ENCODE measurements at regions of chr7 and their contacts with region 1.

Region 1: DNA sequence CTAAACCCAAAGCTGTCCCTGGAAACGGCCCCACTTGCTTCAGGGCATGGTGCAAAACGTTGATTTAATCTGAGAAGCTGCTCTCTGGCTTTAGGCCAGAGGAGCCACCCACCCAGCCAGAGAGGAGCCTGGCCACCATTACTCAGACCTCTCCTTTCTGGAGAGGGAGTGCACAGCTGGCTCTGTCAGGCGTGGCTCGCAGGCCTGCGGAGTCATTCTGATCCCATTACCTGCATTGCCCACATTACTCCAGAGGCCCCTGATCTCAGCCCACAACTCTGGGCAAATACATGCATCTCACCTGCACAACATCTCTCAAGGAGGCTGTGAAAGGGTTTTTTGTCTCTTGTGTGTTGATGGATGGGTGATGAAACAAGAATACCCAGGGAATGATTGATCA is 370.0 kb upstream of the IGFBP3 start:
- DNase-seq: peak; percentile 47
- ATAC-seq: peak; percentile 94
- H3K4me3 ChIP-seq: no peak overlapping the region
- H3K27ac ChIP-seq: peak overlapping the region; percentile 19; the same call in 1 of the 2 replicates
- H3K4me1 ChIP-seq: no peaks in the 10 kb centered on the region
- H3K27me3 ChIP-seq: no peaks in the 10 kb centered on the region
- CTCF ChIP-seq: no peak
- EP300 ChIP-seq: no peak
- POLR2A ChIP-seq: no peak
- RAD21 ChIP-seq: no peak

Region 2: DNA sequence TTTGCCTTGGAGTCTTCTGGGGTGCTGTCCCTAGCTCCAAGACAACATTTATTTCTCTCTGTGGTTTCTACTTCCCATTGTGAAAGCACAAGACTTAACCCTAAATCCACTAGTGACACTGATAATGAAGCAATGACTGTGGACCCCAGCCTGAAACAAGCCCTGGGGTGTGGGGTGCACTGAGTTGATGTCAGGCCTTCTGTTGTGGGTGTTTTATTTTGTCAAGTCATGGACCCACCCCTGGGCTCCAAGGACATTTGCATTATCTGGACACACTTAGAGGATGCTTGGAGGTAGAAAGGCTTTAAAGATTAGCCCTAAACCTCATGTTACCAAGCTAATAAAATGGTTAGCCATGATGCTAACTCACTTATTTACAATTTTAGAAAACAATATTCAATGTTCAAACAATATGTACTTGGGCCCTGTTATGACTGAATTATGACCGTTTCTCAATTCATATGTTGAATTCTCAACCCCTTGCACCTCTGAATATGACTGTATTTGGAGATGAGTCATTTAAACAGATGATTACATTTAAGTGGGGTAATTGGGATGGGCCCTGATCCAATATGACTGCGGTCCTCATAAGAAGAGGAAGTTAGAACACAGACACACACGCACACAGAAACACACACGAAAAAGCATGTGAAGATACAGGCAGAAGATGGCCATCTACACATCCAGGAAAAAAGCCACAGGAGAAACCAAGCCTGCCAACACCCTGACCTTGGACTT is 232.8 kb before region 1 on chr7:
- CTCF ChIA-PET with region 1: no interaction called
- POLR2A ChIA-PET with region 1: interaction called, 3 read pairs
- RAD21 ChIA-PET with region 1: interaction called, 3 read pairs
- SMC1A ChIA-PET with region 1: interaction called, 4 read pairs
- in situ Hi-C with region 1: no loop called
- intact Hi-C with region 1: loop called (anchors 1 kb)
- DNase-seq: no peak
- ATAC-seq: peak; percentile 85
- H3K4me3 ChIP-seq: no peak overlapping the region
- H3K27ac ChIP-seq: no peak overlapping the region
- H3K4me1 ChIP-seq: no peaks in the 10 kb centered on the region
- H3K27me3 ChIP-seq: no peaks in the 10 kb centered on the region
- CTCF ChIP-seq: no peak
- EP300 ChIP-seq: peak; percentile 77 to 82; a peak in 3 of 4 replicates
- POLR2A ChIP-seq: no peak
- RAD21 ChIP-seq: no peak

Region 3: GRCh38 chr7:46139079-46139478 is 152.0 kb before region 1 on chr7:
- CTCF ChIA-PET with region 1: no interaction called
- POLR2A ChIA-PET with region 1: interaction called, 4 read pairs
- RAD21 ChIA-PET with region 1: interaction called, 16 read pairs
- SMC1A ChIA-PET with region 1: interaction called, 7 read pairs
- in situ Hi-C with region 1: no loop called
- intact Hi-C with region 1: no loop called
- DNase-seq: peak; percentile 48
- ATAC-seq: peak; percentile 95
- H3K4me3 ChIP-seq: no peak overlapping the region
- H3K27ac ChIP-seq: no peak overlapping the region
- H3K4me1 ChIP-seq: no peaks in the 10 kb centered on the region
- H3K27me3 ChIP-seq: no peaks in the 10 kb centered on the region
- CTCF ChIP-seq: no peak
- EP300 ChIP-seq: peak; percentile 76 to 91
- POLR2A ChIP-seq: no peak
- RAD21 ChIP-seq: no peak

Region 4: DNA sequence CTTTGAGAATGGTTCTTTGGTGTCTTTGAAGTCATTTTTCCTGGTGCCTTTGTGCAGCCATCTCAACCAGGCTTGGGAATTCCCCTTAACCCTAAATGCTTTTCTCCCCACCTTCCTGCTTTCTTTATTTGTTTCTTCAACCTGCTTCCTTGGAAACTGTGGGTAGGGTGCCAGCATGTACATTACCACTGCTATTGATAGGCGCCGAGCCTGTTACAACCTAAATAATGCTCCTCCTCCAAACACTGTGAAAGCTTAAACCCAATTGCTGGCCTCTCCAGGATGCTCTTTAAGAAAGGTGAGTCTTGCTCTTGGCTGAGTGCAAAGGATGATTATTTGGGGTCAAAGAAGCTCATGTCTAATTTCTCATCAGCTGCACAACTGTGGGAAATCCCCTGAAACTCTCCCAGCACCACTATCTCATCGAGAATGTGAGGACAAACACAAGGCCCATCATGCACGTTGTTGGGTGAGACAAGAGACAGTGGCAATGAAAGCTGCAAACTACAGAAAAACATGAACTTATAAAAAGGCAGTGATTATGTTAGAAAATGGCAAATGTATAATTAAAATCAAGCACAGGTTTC is 84.5 kb before region 1 on chr7:
- CTCF ChIA-PET with region 1: no interaction called
- POLR2A ChIA-PET with region 1: no interaction called
- RAD21 ChIA-PET with region 1: interaction called, 10 read pairs
- SMC1A ChIA-PET with region 1: interaction called, 3 read pairs
- in situ Hi-C with region 1: no loop called
- intact Hi-C with region 1: no loop called
- DNase-seq: peak; percentile 42
- ATAC-seq: peak; percentile 80
- H3K4me3 ChIP-seq: no peak overlapping the region
- H3K27ac ChIP-seq: no peak overlapping the region
- H3K4me1 ChIP-seq: peaks cover 10% of the 10 kb centered on the region
- H3K27me3 ChIP-seq: no peaks in the 10 kb centered on the region
- CTCF ChIP-seq: no peak
- EP300 ChIP-seq: no peak
- POLR2A ChIP-seq: no peak
- RAD21 ChIP-seq: 0 out of 2 replicates have a peak, but pooled peaks have one; percentile 1

Region 5: DNA sequence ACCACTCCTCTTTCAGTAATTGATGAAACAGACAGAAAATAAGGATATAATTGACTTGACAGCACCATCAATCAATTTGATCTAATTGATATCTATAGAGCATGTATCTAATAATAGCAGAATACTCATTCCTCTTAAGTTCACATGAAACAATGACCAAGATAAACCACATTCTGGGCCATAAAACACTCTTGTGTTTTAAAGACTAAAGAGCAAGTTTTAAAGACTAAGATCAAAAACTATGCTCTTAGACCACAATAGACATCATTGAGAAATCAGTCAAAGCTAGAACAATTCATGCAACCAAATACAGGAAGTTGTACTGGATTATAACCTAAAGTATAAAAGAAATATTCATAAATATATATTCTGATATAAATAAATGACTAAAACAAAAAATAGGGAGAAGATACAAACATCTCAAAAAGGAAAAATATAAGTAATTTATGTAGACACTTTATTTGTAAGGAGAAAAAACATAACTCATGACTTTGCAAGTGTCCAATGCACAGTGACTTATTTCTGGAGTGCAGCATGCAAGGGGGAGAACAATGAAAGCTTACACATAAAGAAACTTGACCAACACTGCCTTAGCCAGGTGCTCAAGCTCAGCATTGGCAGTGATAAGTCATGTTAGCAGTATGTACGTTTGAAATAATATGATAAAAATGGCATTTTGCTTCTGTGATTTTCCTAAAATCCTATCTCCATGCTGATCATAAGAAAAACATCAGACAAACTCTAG is 57.3 kb before region 1 on chr7:
- CTCF ChIA-PET with region 1: interaction called, 3 read pairs
- POLR2A ChIA-PET with region 1: no interaction called
- RAD21 ChIA-PET with region 1: interaction called, 7 read pairs
- SMC1A ChIA-PET with region 1: interaction called, 5 read pairs
- in situ Hi-C with region 1: no loop called
- intact Hi-C with region 1: loop called (anchors 1 kb)
- DNase-seq: peak; percentile 17
- ATAC-seq: peak; percentile 96
- H3K4me3 ChIP-seq: no peak overlapping the region
- H3K27ac ChIP-seq: no peak overlapping the region
- H3K4me1 ChIP-seq: no peaks in the 10 kb centered on the region
- H3K27me3 ChIP-seq: no peaks in the 10 kb centered on the region
- CTCF ChIP-seq: no peak
- EP300 ChIP-seq: peak; percentile 50 to 60; a peak in 2 of 4 replicates
- POLR2A ChIP-seq: no peak
- RAD21 ChIP-seq: no peak